Activated CD4-positive, alpha-beta T cell treated with anti-CD3 and anti-CD28 coated beads, Interleukin-2, amount 10 ng/mL, durations not matched to agents 24 days and 14 days (primary cell): ENCODE measurements at regions of chr19 and their contacts with region 1.

Region 1: DNA sequence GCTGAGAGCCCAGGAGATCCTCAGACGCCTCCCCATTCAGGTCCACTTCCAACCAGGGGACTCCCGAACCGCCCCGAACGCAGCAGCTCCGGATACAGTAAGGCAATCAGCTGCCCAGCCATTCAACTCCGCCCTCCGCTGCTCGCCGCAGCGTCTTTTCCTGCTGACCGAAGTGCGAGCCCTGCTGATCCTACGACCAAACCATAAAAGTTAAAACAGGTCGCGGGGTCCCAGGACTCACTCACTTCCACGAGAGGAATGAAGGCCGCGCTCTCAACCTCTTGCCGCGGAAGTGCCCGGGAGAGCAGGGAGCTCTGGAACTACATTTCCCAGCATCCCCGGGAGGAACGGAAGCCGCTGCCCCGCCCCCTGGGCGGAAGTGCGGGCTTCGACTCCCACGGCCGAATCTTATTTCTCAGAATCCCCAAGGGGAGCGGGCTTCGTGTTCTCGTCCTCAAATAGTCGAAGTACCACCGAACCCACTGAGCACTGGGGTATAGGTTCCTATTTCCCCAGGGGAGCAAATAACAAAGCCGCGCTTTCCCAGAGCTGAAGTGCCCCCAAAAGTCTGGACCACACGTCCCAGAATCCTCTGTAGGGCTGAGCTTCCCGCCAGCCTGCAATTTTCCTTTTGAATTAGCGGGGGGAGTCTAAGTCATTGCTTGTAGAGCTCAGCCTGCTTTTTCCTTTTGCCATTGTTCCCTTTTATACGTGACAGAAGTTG is at the start of gene ZNF45:
- DNase-seq: peak; percentile 96
- H3K4me3 Mint-ChIP-seq: peak within 1 kb of the TSS; percentile 92
- H3K27ac Mint-ChIP-seq: peak within 1 kb of the TSS; percentile 94
- H3K4me1 Mint-ChIP-seq: peaks cover 10% of the 10 kb centered on the region
- H3K27me3 Mint-ChIP-seq: no peaks in the 10 kb centered on the region
- total RNA-seq, gene ZNF45: 9.4 and 10.3 TPM in 2 replicates

Region 2: GRCh38 chr19:43826787-43827754 is 108.1 kb before region 1 on chr19 and contains the start of gene ZNF283:
- intact Hi-C with region 1: loop called (anchors 10 kb)
- DNase-seq: peak; percentile 95
- H3K4me3 Mint-ChIP-seq: peak within 1 kb of the TSS; percentile 87
- H3K27ac Mint-ChIP-seq: peak within 1 kb of the TSS; percentile 42
- H3K4me1 Mint-ChIP-seq: peaks cover 13% of the 10 kb centered on the region
- H3K27me3 Mint-ChIP-seq: peaks cover 11% of the 10 kb centered on the region
- total RNA-seq, gene ZNF283: 4.0 and 5.7 TPM in 2 replicates

Region 3: GRCh38 chr19:43901395-43902390 is 33.5 kb before region 1 on chr19:
- intact Hi-C with region 1: loop called (anchors 1 kb)
- DNase-seq: peak; percentile 89
- H3K4me3 Mint-ChIP-seq: peak overlapping the region; percentile 94
- H3K27ac Mint-ChIP-seq: peak overlapping the region; percentile 73
- H3K4me1 Mint-ChIP-seq: peaks cover 11% of the 10 kb centered on the region
- H3K27me3 Mint-ChIP-seq: no peaks in the 10 kb centered on the region

Region 4: GRCh38 chr19:43913383-43913782 is 21.8 kb before region 1 on chr19:
- intact Hi-C with region 1: no loop called
- DNase-seq: no peak
- H3K4me3 Mint-ChIP-seq: no peak overlapping the region
- H3K27ac Mint-ChIP-seq: no peak overlapping the region
- H3K4me1 Mint-ChIP-seq: no peaks in the 10 kb centered on the region
- H3K27me3 Mint-ChIP-seq: no peaks in the 10 kb centered on the region

Region 5: DNA sequence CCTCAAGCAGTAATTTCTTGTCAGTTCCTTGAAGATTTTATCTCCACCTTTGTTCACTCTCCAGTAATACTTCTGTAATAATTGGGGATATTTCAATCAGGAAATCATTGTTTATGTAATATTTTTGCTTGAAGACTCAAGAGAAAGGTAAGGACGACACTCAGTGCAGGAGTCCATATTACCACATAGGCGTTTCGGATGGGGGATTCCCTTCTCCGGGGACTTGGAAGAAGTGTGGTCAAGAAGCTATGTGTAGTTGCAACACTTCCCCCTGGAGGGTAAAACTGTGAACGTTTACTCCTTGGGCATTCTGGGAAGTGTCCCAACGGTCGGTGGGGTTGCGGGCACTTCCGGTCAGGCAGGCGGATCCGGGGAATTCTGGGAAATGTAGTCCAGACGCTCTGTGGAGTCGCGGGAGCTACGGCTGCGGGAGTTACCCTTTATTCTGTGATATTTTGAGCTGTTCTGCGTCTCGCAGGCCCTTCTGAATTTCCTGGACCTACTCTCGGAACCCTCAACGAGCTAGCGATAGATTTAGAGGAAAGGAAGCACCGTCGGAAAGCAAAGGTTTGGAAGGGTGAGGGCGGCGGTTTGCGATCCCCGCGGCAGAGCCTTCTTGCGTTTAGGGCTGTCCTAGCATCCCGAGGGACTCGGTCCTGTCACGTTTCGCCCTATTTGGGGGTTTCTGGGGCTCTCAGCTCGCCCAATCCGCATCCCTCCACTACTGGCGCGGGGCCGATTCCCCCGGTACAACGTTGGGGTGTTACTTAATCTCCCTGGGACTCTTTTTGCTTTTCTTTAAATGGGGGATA is 15.9 kb after region 1 on chr19 and contains the start of gene ZNF221:
- intact Hi-C with region 1: loop called (anchors 1 kb)
- DNase-seq: peak; percentile 87
- H3K4me3 Mint-ChIP-seq: peak within 1 kb of the TSS; percentile 96
- H3K27ac Mint-ChIP-seq: peak within 1 kb of the TSS; percentile 80
- H3K4me1 Mint-ChIP-seq: peaks cover 8% of the 10 kb centered on the region
- H3K27me3 Mint-ChIP-seq: peaks cover 3% of the 10 kb centered on the region
- total RNA-seq, gene ZNF221: 0.58 and 0.64 TPM in 2 replicates

Region 6: DNA sequence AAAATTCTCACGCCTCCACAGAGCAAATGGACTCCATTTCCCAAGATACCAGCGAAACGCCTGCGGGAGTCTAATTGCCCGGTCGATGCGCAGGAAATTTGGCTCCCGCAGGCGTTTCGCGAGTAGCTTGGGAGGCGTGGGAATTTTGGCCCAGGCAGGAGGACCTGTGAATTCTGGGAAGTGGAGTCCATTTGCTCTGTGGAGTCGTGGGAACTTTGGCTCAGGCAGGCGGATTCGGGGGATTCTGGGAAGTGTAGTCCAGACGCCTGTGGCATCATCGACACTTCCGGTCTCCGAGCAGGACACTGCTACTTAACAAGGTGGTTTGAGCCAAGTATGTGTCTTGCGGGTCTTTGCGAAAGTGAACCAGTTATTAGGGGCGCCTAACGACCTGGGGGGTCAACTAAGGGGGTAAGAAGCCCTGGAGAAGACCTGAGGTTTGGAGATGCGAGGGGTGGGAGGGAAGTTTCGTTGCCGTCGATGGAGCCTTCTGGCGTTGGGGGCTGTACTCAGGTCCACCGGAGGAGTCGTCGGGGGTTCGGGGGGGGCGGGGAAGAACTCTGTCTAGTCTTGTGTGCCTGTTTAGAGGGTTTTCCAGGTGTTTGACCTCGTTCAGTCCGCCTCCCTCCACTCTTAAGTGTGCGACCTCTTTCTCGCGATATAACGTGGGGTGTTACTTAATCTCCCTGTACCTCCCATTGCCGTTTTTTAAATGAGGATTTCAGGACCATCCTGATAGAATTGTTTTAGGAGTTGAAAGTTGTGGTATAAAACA is 49.0 kb after region 1 on chr19 and contains the start of gene ZNF155:
- intact Hi-C with region 1: loop called (anchors 5 kb)
- DNase-seq: peak; percentile 91
- H3K4me3 Mint-ChIP-seq: peak within 1 kb of the TSS; percentile 97
- H3K27ac Mint-ChIP-seq: peak within 1 kb of the TSS; percentile 93
- H3K4me1 Mint-ChIP-seq: peaks cover 8% of the 10 kb centered on the region
- H3K27me3 Mint-ChIP-seq: no peaks in the 10 kb centered on the region
- total RNA-seq, gene ZNF155: 4.6 and 6.6 TPM in 2 replicates

Region 7: DNA sequence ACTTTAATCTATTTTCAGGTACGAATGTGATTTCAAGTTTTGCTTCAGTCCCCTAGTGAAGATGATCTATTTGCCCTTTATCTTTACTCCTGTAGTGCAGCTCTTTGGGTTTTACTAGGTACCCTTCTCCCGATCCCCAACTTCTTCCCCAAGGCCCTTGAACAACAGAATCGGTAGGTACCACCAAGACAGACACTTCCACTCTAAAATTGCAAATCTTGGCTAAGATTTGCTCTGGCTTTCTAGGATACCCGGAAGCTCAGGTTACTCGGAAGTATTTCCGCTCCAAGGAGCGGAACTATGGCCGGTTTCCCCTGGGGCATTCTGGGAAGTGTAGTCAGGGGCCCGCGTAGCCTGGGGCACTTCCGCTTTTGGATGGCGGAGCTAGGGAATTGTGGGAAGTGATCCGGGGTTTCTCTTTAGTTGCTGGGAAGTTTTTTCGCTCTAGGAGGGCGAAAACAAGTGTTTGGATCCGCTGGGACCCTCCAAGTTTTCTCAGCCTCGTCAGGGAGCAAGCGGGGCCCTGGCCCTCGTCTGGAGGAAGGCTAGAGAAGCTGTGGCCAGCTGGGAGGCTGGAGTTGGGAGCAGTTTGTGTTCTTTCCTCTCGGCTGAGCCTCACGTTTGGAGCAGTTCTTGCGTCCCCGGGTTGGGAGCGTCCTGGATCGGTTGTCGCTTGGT is 272.1 kb after region 1 on chr19:
- intact Hi-C with region 1: loop called (anchors 5 kb)
- DNase-seq: peak; percentile 94
- H3K4me3 Mint-ChIP-seq: peak overlapping the region; percentile 95
- H3K27ac Mint-ChIP-seq: peak overlapping the region; percentile 80
- H3K4me1 Mint-ChIP-seq: peaks cover 10% of the 10 kb centered on the region
- H3K27me3 Mint-ChIP-seq: peaks cover 2% of the 10 kb centered on the region